ENCODE measurements at regions of chr15 and their contacts with region 1.

Region 1: GRCh38 chr15:66774001-66774814 is 72.2 kb downstream of the SMAD6 start:
- DNase-seq: peak; percentile 59
- H3K4me3 ChIP-seq: no peak overlapping the region
- H3K27ac ChIP-seq: no peak overlapping the region
- H3K4me1 ChIP-seq: peaks cover under 1% of the 10 kb centered on the region
- H3K27me3 ChIP-seq: no peaks in the 10 kb centered on the region
- CTCF ChIP-seq: peak; percentile 94 to 99

Region 2: GRCh38 chr15:66603301-66604179 is 170.7 kb before region 1 on chr15:
- CTCF ChIA-PET with region 1: no interaction called
- dilution Hi-C with region 1: no loop called
- in situ Hi-C with region 1: no loop called
- intact Hi-C with region 1: loop called (anchors 1 kb)
- DNase-seq: peak; percentile 17
- H3K4me3 ChIP-seq: no peak overlapping the region
- H3K27ac ChIP-seq: no peak overlapping the region
- H3K4me1 ChIP-seq: no peaks in the 10 kb centered on the region
- H3K27me3 ChIP-seq: no peaks in the 10 kb centered on the region
- CTCF ChIP-seq: peak; percentile 51 to 85

Region 3: GRCh38 chr15:66619151-66619903 is 154.9 kb before region 1 on chr15:
- CTCF ChIA-PET with region 1: interaction called, 4 read pairs
- dilution Hi-C with region 1: no loop called
- in situ Hi-C with region 1: loop called (anchors 10 kb)
- intact Hi-C with region 1: loop called (anchors 1 kb)
- DNase-seq: peak; percentile 57
- H3K4me3 ChIP-seq: no peak overlapping the region
- H3K27ac ChIP-seq: no peak overlapping the region
- H3K4me1 ChIP-seq: peaks cover 4% of the 10 kb centered on the region
- H3K27me3 ChIP-seq: peaks cover 11% of the 10 kb centered on the region
- CTCF ChIP-seq: peak; percentile 77 to 92

Region 4: DNA sequence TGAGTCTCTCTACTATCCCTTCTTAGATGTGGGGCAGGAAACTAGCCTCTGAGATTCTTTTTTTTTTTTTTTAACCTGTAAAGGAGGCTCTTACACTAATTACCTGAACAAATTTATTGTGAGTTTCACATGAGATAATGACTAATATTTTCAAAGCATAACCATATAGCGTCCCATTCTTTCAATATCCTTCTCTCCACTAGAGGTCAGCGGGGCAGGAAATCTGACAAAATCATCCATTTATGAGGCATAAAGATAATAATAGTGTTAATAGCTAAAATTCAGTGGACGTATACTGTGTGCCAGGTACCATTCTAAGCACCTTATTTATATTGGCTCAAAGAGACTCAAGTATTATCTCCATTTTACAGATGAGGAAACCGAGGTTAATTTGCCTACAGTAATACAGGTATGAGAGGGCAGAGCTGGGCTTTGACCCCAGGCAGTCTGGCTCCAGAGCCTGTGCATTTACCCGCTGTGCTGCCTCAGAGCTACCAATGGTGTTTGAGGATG is 88.5 kb before region 1 on chr15:
- CTCF ChIA-PET with region 1: no interaction called
- dilution Hi-C with region 1: loop called (anchors 5 kb)
- in situ Hi-C with region 1: no loop called
- intact Hi-C with region 1: loop called (anchors 1 kb)
- DNase-seq: no peak
- H3K4me3 ChIP-seq: no peak overlapping the region
- H3K27ac ChIP-seq: no peak overlapping the region
- H3K4me1 ChIP-seq: no peaks in the 10 kb centered on the region
- H3K27me3 ChIP-seq: no peaks in the 10 kb centered on the region
- CTCF ChIP-seq: peak; percentile 50 to 54

Region 5: GRCh38 chr15:66700802-66701421 is 73.3 kb before region 1 on chr15:
- CTCF ChIA-PET with region 1: no interaction called
- dilution Hi-C with region 1: no loop called
- in situ Hi-C with region 1: no loop called
- intact Hi-C with region 1: loop called (anchors 2 kb)
- DNase-seq: peak; percentile 89
- H3K4me3 ChIP-seq: peak overlapping the region; percentile 56 to 65 (median 62)
- H3K27ac ChIP-seq: no peak overlapping the region
- H3K4me1 ChIP-seq: peaks cover 30% of the 10 kb centered on the region
- H3K27me3 ChIP-seq: peaks cover 8% of the 10 kb centered on the region
- CTCF ChIP-seq: no peak

Region 6: GRCh38 chr15:67146875-67147381 is 372.7 kb after region 1 on chr15:
- CTCF ChIA-PET with region 1: no interaction called
- dilution Hi-C with region 1: no loop called
- in situ Hi-C with region 1: no loop called
- intact Hi-C with region 1: no loop called
- DNase-seq: peak; percentile 99
- H3K4me3 ChIP-seq: no peak overlapping the region
- H3K27ac ChIP-seq: peak overlapping the region; percentile 92
- H3K4me1 ChIP-seq: peaks cover 75% of the 10 kb centered on the region
- H3K27me3 ChIP-seq: no peaks in the 10 kb centered on the region
- CTCF ChIP-seq: no peak